CD8-positive, alpha-beta T cell (primary cell): ENCODE measurements at regions of chr17 and their contacts with region 1.

Region 1: DNA sequence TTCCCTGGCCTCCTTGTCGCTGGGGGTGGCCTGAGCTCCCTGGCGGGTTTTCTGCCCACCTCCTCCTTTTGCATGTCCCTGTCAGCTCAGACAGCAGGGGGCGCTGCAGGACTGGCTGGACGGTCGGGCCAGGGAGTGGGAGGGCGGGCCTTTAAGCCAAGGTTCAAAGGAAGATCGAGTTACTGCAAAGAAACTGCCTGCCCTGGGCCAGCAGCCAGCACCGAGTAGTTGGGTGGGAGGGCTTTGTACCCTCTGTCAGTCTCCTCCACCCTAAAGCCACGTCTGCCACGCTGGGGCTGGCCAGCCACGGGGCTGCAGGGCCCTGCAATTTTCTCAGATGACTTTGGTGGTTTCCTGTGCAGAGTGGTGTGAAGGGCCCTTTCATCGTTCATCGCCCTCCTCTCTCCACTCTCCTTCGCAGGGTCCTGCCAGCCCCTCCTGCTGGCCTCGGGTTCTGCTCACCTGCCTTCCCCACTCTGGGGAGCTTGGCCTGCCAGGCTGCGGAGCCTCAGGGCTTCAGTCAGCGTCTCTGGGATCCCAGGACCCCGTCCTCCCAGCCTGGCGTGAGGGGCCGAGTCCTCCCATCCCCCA is 12.3 kb downstream of the GPR142 start:
- DNase-seq: peak; percentile 88 to 97 (median 90)
- ATAC-seq: peak; percentile 93
- H3K4me3 ChIP-seq: peak overlapping the region in 1 of 2 experiments; percentile 32
- H3K4me3 Mint-ChIP-seq: no peak overlapping the region
- H3K27ac ChIP-seq: peak overlapping the region in 1 of 2 experiments; percentile 37
- H3K27ac Mint-ChIP-seq: no peak overlapping the region
- H3K4me1 ChIP-seq: peaks cover 10% of the 10 kb centered on the region
- H3K4me1 Mint-ChIP-seq: peaks cover 6% of the 10 kb centered on the region
- H3K27me3 ChIP-seq: no peaks in the 10 kb centered on the region
- H3K27me3 Mint-ChIP-seq: peaks cover 3% of the 10 kb centered on the region
- CTCF ChIP-seq: peak; percentile 81

Region 2: GRCh38 chr17:74325743-74326379 is 53.7 kb before region 1 on chr17 and contains the start of gene KIF19:
- CTCF ChIA-PET with region 1: no interaction called
- POLR2A ChIA-PET with region 1: no interaction called
- intact Hi-C with region 1: no loop called
- DNase-seq: peak; percentile 6 to 75 (median 43)
- ATAC-seq: peak; percentile 91
- H3K4me3 ChIP-seq: peak within 1 kb of the TSS; percentile 45 to 49
- H3K4me3 Mint-ChIP-seq: peak within 1 kb of the TSS; percentile 68
- H3K27ac ChIP-seq: no peak within 1 kb of the TSS
- H3K27ac Mint-ChIP-seq: peak within 1 kb of the TSS; percentile 13
- H3K4me1 ChIP-seq: peaks cover 19% of the 10 kb centered on the region
- H3K4me1 Mint-ChIP-seq: peaks cover 20% of the 10 kb centered on the region
- H3K27me3 ChIP-seq: no peaks in the 10 kb centered on the region
- H3K27me3 Mint-ChIP-seq: peaks cover 19% of the 10 kb centered on the region
- CTCF ChIP-seq: no peak
- total RNA-seq, gene KIF19: 0.64 to 0.98 TPM

Region 3: DNA sequence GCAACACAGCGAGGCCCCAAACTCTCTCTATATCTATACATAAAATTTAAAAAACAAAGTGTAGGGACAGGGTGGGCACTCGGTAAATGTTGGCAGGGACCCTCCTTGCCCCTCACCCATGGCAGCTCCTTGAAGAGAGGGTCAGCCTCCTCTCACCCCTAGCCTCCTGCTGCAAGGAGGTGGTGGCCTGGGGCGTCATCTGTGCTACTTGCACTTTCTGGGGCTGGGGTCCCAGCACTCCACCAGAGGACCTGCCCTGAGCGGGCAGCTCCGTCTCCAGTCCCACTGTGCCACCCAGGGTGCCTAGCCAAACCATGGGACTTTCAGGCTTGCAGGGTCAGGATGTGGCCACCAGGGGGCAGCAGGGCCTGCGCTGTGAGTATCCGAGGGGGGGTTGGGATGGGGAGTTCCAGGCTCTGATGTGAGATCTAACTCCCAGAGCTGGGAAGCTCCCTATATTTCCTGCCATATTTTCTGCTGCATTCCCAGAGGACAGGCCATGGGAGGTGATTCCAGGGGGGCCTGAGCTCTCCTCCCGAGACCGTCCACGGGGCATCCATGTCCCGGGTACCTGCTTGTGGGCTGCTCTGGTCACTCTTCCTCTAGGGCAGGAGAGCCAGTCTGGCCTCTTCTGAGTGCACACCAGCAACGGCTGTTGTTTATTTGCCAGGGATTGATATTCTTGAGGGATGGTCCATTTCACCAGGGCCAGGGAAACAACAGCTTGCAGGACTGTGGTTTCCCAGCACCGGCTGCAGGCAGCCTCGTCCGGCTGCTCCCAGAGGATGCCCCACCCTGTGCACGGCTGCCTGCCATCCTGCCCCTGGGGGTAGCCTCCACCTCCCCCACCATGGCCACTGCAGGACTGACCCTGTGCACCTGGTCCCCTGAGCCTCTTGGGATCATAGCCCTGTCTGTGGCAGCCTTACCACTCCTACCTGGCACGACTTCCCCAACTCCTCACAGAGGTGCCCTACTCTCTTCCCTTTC is 11.2 kb before region 1 on chr17:
- CTCF ChIA-PET with region 1: interaction called, 60 read pairs
- POLR2A ChIA-PET with region 1: interaction called, 5 read pairs
- intact Hi-C with region 1: no loop called
- DNase-seq: peak; percentile 49 to 84 (median 78)
- ATAC-seq: peak; percentile 83
- H3K4me3 ChIP-seq: peak overlapping the region; percentile 3 to 26
- H3K4me3 Mint-ChIP-seq: peak overlapping the region; percentile 54
- H3K27ac ChIP-seq: no peak overlapping the region
- H3K27ac Mint-ChIP-seq: no peak overlapping the region
- H3K4me1 ChIP-seq: peaks cover 16% of the 10 kb centered on the region
- H3K4me1 Mint-ChIP-seq: peaks cover 12% of the 10 kb centered on the region
- H3K27me3 ChIP-seq: peaks cover 0 to 3% of the 10 kb centered on the region in 2 experiments
- H3K27me3 Mint-ChIP-seq: peaks cover 6% of the 10 kb centered on the region
- CTCF ChIP-seq: peak; percentile 85

Region 4: DNA sequence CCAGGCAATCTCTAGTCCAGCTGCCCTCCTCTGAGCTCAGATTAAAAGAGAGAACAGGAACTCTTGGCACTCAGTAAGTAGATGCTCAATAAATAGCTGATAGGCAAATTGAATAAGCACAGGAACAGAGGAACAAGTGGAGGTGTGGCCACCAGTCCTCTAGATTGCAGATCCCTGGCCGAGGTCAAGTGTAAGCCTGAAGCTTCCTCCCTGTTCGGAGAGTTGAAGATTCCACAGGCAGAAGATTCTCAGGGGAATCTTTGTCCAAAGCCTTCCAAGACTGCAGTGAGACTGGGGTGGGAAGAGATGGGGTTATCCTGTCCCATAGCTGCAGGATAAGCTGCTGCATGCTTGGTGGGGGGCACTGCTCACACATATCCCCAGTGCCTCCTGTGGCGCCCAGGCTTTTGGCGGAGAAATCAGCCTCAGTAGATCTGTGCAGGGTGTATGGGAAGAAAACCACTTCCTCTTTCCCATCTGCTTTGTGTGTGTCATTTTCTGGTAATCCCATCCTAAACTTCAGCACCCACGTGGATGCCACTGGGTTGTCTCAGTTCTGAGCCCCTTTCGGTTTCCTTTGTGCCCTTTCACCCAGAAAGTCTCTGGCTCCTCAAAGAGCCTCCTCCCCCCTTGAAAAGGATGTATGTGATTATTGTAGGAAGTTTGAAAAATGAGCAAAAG is 99.0 kb after region 1 on chr17:
- CTCF ChIA-PET with region 1: interaction called, 15 read pairs
- POLR2A ChIA-PET with region 1: no interaction called
- intact Hi-C with region 1: no loop called
- DNase-seq: peak in 4 of 9 experiments; percentile 46 to 81 (median 52)
- ATAC-seq: peak; percentile 68
- H3K4me3 ChIP-seq: no peak overlapping the region
- H3K4me3 Mint-ChIP-seq: peak overlapping the region; percentile 47
- H3K27ac ChIP-seq: peak overlapping the region in 1 of 2 experiments; percentile 74
- H3K27ac Mint-ChIP-seq: peak overlapping the region; percentile 76
- H3K4me1 ChIP-seq: peaks cover 51% of the 10 kb centered on the region
- H3K4me1 Mint-ChIP-seq: peaks cover 55% of the 10 kb centered on the region
- H3K27me3 ChIP-seq: no peaks in the 10 kb centered on the region
- H3K27me3 Mint-ChIP-seq: no peaks in the 10 kb centered on the region
- CTCF ChIP-seq: no peak

Region 5: GRCh38 chr17:74502861-74503260 is 123.3 kb after region 1 on chr17:
- CTCF ChIA-PET with region 1: interaction called, 116 read pairs
- POLR2A ChIA-PET with region 1: no interaction called
- intact Hi-C with region 1: no loop called
- DNase-seq: peak in 1 of 9 experiments; percentile 5
- ATAC-seq: no peak
- H3K4me3 ChIP-seq: no peak overlapping the region
- H3K4me3 Mint-ChIP-seq: no peak overlapping the region
- H3K27ac ChIP-seq: no peak overlapping the region
- H3K27ac Mint-ChIP-seq: no peak overlapping the region
- H3K4me1 ChIP-seq: no peaks in the 10 kb centered on the region
- H3K4me1 Mint-ChIP-seq: no peaks in the 10 kb centered on the region
- H3K27me3 ChIP-seq: no peaks in the 10 kb centered on the region
- H3K27me3 Mint-ChIP-seq: no peaks in the 10 kb centered on the region
- CTCF ChIP-seq: no peak

Region 6: GRCh38 chr17:74601944-74602572 is 222.5 kb after region 1 on chr17:
- CTCF ChIA-PET with region 1: interaction called, 6 read pairs
- POLR2A ChIA-PET with region 1: no interaction called
- intact Hi-C with region 1: loop called in 1 of 2 experiments (anchors 1 kb)
- DNase-seq: peak in 5 of 9 experiments; percentile 7 to 54 (median 24)
- ATAC-seq: no peak
- H3K4me3 ChIP-seq: no peak overlapping the region
- H3K4me3 Mint-ChIP-seq: no peak overlapping the region
- H3K27ac ChIP-seq: no peak overlapping the region
- H3K27ac Mint-ChIP-seq: no peak overlapping the region
- H3K4me1 ChIP-seq: peaks cover 32% of the 10 kb centered on the region
- H3K4me1 Mint-ChIP-seq: peaks cover 11% of the 10 kb centered on the region
- H3K27me3 ChIP-seq: peaks cover 0 to 2% of the 10 kb centered on the region in 2 experiments
- H3K27me3 Mint-ChIP-seq: peaks cover 39% of the 10 kb centered on the region
- CTCF ChIP-seq: peak; percentile 40

Region 7: DNA sequence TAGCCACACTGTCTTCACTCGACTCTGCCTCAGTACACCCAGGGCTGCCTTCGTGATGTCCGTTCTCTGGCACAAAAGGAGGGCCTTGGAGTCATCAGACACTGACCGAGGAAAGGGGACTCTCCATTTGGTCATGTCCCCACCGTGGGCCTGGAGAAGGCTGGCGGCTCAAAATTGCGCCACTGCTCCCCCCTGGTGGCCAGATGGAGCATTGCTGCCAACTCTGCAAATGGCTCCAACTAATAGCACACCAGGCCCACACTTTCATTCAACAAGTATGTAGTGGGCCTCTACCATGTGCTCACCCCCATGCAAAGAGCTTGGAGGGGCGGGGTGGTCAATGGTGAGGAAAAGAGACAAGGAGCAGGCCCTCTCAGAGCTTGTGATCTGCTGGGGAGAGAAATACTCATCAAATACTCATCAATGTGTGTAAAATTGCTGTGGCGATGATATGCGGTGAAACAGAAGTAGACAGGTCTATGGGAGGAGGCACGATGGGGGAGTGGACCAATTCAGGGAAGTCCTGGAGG is 485.3 kb after region 1 on chr17:
- CTCF ChIA-PET with region 1: no interaction called
- POLR2A ChIA-PET with region 1: no interaction called
- intact Hi-C with region 1: loop called in 1 of 2 experiments (anchors 2 kb)
- DNase-seq: peak; percentile 46 to 84 (median 73)
- ATAC-seq: peak; percentile 75
- H3K4me3 ChIP-seq: no peak overlapping the region
- H3K4me3 Mint-ChIP-seq: no peak overlapping the region
- H3K27ac ChIP-seq: no peak overlapping the region
- H3K27ac Mint-ChIP-seq: no peak overlapping the region
- H3K4me1 ChIP-seq: peaks cover 21% of the 10 kb centered on the region
- H3K4me1 Mint-ChIP-seq: peaks cover 13% of the 10 kb centered on the region
- H3K27me3 ChIP-seq: peaks cover 8 to 21% of the 10 kb centered on the region in 2 experiments
- H3K27me3 Mint-ChIP-seq: peaks cover 13% of the 10 kb centered on the region
- CTCF ChIP-seq: peak; percentile 92